Head of caudate nucleus (tissue), 42 donors: ENCODE measurements at regions of chr2 and their contacts with region 1.

Region 1: DNA sequence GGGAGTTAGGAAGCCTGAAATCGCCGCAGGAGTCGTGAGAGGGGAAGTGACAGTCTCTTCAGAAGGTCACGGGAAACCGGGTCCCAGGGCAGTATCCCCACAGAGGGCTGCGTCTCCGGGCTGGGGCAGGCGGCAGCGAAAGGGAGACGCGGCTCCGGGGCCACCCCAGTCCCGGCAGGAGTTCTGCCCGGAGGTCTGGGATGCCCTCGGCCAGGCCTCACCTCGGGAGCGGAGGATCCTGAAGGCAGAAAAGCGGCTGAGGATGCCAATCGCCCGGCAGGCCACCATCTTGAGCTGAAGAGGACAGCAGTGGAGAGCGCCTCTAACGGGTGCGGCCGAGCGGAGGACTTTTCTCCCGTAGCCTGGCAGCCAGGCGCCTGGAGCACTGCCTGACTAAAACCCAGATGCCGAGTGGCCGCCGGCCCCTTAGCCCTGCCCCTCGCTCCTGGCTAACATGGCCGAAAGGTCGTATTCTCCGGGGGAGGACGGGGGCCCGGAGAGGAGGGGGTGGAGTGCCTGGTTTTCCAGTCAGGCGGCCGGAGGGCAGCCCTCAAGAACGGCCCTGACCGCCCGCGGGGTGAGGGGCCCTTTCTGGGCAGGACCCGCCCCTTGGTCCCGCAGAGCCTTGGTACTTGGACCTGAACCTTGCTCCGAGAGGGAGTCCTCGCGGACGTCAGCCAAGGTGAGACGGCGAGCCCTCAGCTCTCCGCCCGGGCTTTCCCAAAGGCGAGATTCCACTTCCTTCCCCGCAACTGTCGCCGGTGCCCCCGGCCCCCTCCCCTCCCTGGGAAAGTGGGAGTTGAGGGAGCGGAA is at the starts of genes HADHA and HADHB:
- DNase-seq: peak; percentile 81 to 96 (median 90)

Region 2: GRCh38 chr2:26178746-26179436 is 65.6 kb before region 1 on chr2:
- intact Hi-C with region 1: loop called (anchors 10 kb)
- DNase-seq: peak in 24 of 42 donors; percentile 28 to 71 (median 40)

Region 3: GRCh38 chr2:26299471-26300101 is 55.1 kb after region 1 on chr2:
- intact Hi-C with region 1: no loop called
- DNase-seq: no peak

Region 4: DNA sequence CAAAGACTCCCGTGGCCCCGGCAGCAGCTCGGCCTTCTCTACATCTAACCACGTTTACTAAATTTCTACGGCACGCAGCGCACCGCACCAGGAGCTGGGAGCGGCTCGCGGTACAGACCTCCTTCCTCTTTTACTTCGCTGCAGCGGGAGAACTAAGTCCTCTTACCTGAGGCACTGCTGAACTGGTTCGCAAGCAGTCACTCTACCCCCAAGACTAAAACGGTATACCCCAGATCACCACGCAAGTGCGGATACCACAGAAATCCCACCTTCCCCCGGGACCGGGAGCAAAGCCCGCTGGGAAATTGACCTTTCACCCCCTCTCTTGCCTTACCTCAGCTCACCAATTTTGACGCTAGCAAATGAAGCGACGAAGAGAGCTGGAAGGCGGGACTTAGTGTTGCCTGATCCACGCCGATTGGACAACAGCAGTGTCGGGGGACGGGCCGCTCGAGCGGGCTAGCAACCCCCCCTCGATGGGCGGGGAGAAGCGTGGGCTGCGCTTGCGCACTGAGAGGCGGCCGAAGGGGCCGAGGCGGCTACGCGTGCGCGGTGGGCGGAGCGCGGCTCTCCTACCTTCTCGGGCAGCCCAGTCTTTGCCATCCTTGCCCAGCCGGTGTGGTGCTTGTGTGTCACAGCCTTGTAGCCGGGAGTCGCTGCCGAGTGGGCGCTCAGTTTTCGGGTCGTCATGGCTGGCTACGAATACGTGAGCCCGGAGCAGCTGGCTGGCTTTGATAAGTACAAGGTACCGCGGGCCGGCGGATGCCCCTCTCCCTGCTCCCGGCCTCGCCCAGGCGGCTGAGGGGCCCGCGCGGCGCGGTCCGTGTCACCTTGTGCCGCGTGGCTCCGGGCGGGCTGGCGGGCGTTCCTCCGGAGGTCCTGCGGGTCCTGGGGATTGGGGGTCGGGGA is 101.3 kb after region 1 on chr2 and contains the start of gene SELENOI:
- intact Hi-C with region 1: loop called (anchors 10 kb)
- DNase-seq: peak; percentile 99 to 100 (median 99)